GM13977 (cell line): ENCODE measurements at regions of chr1 and their contacts with region 1.

Region 1: GRCh38 chr1:55277377-55278130 is 62.4 kb upstream of the USP24 start:
- DNase-seq: peak; percentile 71
- CTCF ChIP-seq: peak; percentile 74

Region 2: DNA sequence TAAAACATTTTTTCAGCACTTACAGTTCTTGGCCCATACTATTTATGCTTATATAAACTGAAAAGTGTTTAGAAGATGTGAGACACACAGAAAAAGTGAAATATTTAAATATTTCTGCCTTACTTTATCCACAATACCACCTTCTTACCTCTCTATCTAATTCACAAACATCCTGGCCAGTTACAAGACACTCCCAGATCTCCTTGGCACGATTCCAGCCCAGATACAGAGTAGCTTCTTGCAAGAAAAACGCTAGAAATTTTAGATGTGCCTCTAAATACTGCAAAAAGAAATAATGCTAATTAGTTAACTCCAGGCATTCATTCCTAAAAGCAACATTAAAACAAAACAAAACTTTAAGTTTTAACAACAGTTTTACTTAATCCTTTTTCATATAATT is 130.8 kb before region 1 on chr1:
- in situ Hi-C with region 1: loop called (anchors 5 kb)
- DNase-seq: no peak
- CTCF ChIP-seq: no peak

Region 3: DNA sequence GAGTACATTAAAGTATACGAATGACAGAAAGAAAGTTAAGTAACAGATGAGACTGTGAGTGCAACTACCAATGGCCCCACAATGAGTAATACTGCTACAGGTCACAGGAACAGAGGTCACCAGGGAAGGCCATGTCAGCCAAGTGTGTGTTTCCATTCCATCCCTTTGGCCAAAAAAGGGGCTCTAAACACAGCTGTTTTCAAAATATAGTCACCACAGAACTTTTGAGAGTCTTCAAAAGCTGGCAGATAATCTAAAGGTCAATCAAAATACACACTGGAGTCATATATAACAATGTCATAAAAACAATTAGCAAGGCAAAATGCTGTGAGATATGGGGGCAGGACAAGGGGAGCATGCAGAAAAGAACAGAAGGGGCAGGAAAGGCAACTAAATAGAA is 72.6 kb before region 1 on chr1:
- in situ Hi-C with region 1: loop called (anchors 10 kb)
- DNase-seq: peak; percentile 43
- CTCF ChIP-seq: no peak